Psoas muscle (tissue), 8 donors: ENCODE measurements at regions of chr12 and their contacts with region 1.

Region 1: DNA sequence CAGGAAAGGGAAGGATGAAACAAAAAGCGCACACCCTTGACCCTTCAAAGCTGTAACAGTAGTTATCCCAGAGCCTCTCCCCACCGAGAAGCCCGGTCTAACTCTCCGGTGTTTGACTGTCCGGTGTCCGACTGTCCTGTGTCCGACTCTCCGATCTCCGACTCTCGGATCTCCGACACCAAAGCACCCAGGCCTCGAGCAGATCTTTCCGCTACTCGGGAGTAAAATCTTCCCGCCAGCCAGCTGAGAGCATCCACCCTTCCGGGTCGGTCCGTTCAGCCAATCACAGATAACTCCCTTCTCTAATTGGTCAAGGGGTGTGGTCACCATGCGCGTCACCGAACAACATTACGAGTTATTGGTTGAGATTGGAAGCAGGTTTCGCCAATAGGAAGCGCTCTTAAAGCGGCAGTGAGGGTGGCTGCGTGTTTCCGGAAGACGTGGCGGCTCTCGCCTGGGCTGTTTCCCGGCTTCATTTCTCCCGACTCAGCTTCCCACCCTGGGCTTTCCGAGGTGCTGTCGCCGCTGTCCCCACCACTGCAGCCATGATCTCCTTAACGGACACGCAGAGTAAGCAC is at the starts of genes GOLT1B and RECQL:
- DNase-seq: peak; percentile 88 to 93
- ATAC-seq: peak; percentile 99 to 100 (median 100)
- H3K4me3 ChIP-seq: peak within 1 kb of the TSS; percentile 95
- H3K27ac ChIP-seq: peak within 1 kb of the TSS; percentile 89
- H3K4me1 ChIP-seq: peaks cover 40% of the 10 kb centered on the region
- H3K27me3 ChIP-seq: no peaks in the 10 kb centered on the region
- CTCF ChIP-seq: no peak
- total RNA-seq, gene GOLT1B: 14.0 to 30.5 (median 19.9) TPM
- total RNA-seq, gene RECQL: 13.2 to 16.3 (median 13.5) TPM

Region 2: DNA sequence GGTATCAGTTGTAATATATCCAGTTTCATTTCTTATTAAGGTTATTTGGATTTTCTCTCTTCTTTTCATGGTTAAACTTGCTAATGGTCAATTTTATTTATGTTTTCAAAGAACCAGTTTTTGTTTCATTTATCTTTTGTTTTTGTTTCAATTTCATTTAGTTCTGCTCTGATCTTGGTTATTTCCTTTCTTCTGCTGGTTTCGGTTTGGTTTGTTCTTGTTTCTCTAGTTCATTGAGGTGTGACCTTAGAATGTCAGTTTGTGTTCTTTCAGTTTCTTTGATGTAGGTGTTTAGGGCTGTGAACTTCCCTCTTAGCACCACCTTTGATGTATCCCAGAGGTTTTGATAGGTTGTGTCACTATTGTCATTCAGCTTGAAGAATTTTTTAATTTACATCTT is 516.1 kb before region 1 on chr12:
- intact Hi-C with region 1: no loop called
- DNase-seq: no peak
- ATAC-seq: no peak
- H3K4me3 ChIP-seq: no peak overlapping the region
- H3K27ac ChIP-seq: no peak overlapping the region
- H3K4me1 ChIP-seq: no peaks in the 10 kb centered on the region
- H3K27me3 ChIP-seq: no peaks in the 10 kb centered on the region
- CTCF ChIP-seq: no peak

Region 3: DNA sequence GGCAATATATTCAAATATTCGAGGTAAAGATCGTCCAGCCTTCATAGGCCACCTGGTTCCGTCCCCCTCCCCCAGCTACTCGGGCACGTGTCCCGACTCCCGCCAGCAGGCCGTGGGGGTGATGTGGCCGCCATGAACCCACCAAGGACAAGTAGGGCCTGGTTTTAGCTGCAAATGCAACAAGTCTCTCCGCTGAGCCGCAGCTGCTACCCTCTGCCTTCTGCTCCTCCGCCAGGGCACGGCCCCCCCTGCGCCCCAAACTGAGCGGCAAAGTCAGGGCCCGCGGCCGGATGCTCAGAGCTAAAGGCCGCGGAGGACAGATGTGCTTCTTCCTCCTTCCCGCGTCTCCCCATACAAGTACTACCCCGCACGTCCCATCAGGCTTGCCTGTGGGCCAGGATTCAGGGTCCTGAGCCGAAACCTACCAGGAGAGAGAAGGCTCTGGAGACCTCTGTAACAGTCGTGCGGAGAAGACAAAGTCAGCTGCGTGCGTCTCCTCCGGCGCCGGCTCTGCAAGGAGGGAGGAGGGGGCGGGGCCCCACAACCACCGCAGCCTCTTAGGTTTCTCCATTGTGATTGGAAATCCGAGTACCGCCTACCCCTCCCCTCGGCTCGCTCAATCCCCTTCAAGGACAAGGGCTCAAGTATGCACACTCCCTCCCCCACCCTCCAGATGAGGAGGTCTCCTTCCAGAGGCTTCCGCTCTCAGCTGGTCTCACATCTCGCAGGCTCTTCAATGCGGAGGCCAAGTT is 156.0 kb after region 1 on chr12 and contains the start of gene LDHB:
- intact Hi-C with region 1: loop called in 1 of 2 experiments (anchors 5 kb)
- DNase-seq: peak; percentile 94
- ATAC-seq: peak; percentile 92 to 98 (median 95)
- H3K4me3 ChIP-seq: peak within 1 kb of the TSS; percentile 84
- H3K27ac ChIP-seq: peak within 1 kb of the TSS; percentile 77
- H3K4me1 ChIP-seq: peaks cover 5% of the 10 kb centered on the region
- H3K27me3 ChIP-seq: peaks cover 0 to 3% (median 0%) of the 10 kb centered on the region in 3 donors
- CTCF ChIP-seq: no peak
- total RNA-seq, gene LDHB: 71.6 to 616 (median 350) TPM

Region 4: DNA sequence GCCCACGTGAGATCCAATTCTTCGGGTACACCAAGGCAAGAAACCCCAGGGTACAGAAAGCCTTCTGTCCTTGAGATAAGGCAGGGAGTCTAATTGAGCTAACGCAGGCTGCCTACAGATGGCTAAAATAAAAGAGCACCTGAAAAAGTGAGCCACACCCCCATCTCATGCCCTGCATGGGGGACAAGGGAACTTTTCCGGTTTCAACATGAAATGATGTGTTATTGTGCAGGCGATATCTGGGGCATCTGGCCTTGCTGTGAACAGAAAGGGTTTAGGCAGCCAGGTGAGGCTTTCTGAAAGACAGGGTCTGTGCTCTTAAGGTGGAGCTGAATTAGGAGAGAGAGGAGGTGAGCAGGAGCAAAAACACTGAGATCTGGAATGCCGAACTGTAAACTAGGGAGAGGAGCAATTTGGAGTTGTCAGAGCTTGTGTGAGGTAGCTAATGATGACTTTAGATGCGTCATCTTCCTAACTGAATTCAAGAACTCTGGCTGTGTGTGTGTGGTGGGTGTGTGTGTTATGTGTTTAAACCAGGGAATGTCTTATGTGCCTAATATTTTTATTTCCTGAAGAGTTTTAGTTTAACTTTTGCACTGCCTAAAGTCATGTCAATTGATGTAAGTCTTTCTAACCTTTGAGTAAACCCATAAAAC is 176.3 kb after region 1 on chr12:
- intact Hi-C with region 1: loop called in 1 of 2 experiments (anchors 10 kb)
- DNase-seq: no peak
- ATAC-seq: no peak
- H3K4me3 ChIP-seq: no peak overlapping the region
- H3K27ac ChIP-seq: no peak overlapping the region
- H3K4me1 ChIP-seq: no peaks in the 10 kb centered on the region
- H3K27me3 ChIP-seq: no peaks in the 10 kb centered on the region
- CTCF ChIP-seq: no peak